ENCODE measurements at regions of chr16 and their contacts with region 1.

Region 1: GRCh38 chr16:71421911-71422310 is 19.9 kb downstream of the TLE7 start:
- DNase-seq: peak; percentile 27
- H3K4me3 ChIP-seq: no peak overlapping the region
- H3K27ac ChIP-seq: no peak overlapping the region
- H3K4me1 ChIP-seq: peaks cover 0 to 4% (median 0%) of the 10 kb centered on the region in 4 donors
- H3K27me3 ChIP-seq: peaks cover 34% of the 10 kb centered on the region
- CTCF ChIP-seq: peak in 2 of 5 experiments; percentile 34 to 38
- EP300 ChIP-seq: no peak
- POLR2A ChIP-seq: no peak

Region 2: DNA sequence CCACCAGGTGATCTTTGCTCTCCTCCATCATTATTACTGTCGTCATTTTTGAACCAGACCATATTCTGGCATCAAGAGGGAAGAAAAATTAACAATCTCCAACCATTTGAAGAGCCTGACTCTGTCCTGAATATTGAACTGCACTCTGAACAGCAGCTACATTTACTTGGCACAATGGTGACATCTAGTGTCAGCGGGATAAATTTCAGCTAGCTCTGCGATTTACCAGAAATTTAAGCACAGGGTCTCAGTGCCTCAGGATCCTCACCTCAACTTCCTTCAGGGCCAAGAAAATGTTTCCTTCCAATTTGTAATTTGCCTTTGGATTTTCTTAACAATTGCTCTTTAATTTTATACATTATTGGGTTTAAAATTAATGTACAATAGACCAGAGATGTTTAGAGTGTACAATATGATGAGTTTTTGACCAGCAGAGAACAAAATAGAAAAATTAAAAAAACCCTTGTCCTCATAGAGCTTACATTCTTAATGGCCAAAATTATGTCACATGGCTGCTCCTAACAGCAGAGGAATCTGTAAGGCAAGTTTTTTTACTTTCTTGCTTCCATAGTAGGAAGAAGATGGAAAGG is 78.0 kb after region 1 on chr16:
- in situ Hi-C with region 1: loop called in 2 of 4 experiments (anchors 5 kb)
- intact Hi-C with region 1: no loop called
- DNase-seq: peak; percentile 26
- H3K4me3 ChIP-seq: no peak overlapping the region
- H3K27ac ChIP-seq: no peak overlapping the region
- H3K4me1 ChIP-seq: no peaks in the 10 kb centered on the region
- H3K27me3 ChIP-seq: no peaks in the 10 kb centered on the region
- CTCF ChIP-seq: peak; percentile 53 to 62 (median 59)
- EP300 ChIP-seq: no peak
- POLR2A ChIP-seq: no peak

Region 3: GRCh38 chr16:72797621-72798020 is 1375.7 kb after region 1 on chr16:
- in situ Hi-C with region 1: no loop called
- intact Hi-C with region 1: no loop called
- DNase-seq: no peak
- H3K4me3 ChIP-seq: no peak overlapping the region
- H3K27ac ChIP-seq: peak overlapping the region in 2 of 4 donors; percentile 36 to 56
- H3K4me1 ChIP-seq: no peaks in the 10 kb centered on the region
- H3K27me3 ChIP-seq: no peaks in the 10 kb centered on the region
- CTCF ChIP-seq: no peak
- EP300 ChIP-seq: no peak
- POLR2A ChIP-seq: no peak

Measured in transverse colon (tissue), 4 donors.